Head of caudate nucleus (tissue), 42 donors: ENCODE measurements at regions of chr2 and their contacts with region 1.

Region 1: DNA sequence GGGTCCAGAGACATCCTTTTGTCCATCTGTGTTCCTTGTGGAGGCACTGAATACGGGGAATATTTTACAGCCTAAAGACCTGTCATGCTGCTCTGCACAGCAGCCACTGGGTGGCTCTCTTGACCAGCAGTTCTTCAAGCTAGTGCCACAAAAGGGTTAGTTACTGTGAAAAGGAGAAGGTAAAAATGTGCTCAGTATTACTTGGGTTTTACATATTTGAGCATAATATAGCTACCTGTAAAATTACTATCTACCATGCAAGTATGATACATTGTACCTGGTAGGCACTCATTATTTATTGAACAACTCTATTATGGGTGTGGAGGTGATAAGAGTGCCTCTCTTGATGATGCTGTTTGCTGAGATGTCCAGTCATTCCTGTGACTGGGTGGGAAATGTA is 23.6 kb downstream of the FZD5 start:
- DNase-seq: peak in 41 of 42 donors; percentile 44 to 83 (median 68)

Region 2: DNA sequence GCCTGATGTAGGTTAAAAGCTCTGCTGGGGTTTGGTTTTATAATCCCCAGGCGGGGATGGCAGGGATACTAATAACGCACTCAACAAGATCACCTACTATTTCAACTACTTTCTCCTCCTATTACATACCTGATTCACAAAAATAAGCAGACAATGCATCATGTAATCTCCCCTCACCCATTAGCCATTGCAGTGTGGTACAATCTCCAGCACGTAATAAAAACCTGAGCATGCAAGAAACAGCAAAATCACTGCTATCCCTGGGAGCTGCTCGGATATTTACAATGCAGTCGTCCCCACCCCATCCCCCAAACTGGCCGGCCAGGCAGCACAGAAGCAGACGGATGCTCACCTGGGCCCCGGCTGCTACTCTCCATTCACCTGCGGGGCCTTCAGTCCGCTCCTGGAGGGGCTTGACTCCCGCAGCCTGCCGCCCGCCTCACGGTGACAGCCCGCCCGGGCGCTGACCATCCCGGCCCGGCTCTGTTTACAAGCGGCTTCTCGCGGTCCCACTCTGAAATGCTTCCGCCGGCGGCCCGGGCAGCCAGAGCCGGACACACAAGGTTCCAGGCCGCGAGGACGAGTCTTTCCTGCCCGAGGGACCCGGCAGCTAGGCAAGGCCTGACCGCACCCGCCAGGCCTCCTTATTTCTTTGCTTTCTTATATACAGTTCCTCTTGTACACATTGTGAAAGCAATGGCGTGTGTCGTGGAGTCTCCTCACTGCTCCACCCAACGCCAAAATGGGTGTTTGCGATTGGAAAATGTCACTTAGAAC is 279.1 kb after region 1 on chr2 and contains the start of gene PLEKHM3:
- intact Hi-C with region 1: loop called (anchors 5 kb)
- DNase-seq: peak; percentile 80 to 96 (median 90)

Region 3: GRCh38 chr2:208040199-208041171 is 294.4 kb after region 1 on chr2:
- intact Hi-C with region 1: loop called (anchors 5 kb)
- DNase-seq: peak in 41 of 42 donors; percentile 30 to 88 (median 62)